Endothelial cell of umbilical vein (primary cell): ENCODE measurements at regions of chr18 and their contacts with region 1.

Region 1: GRCh38 chr18:21997207-21998143 is 171.9 kb upstream of the GATA6 start:
- DNase-seq: peak; percentile 68
- H3K4me3 ChIP-seq: no peak overlapping the region
- H3K27ac ChIP-seq: no peak overlapping the region
- H3K4me1 ChIP-seq: no peaks in the 10 kb centered on the region
- H3K27me3 ChIP-seq: peaks cover 0 to 2% of the 10 kb centered on the region in 2 experiments
- CTCF ChIP-seq: peak; percentile 70 to 74
- POLR2A ChIP-seq: no peak

Region 2: DNA sequence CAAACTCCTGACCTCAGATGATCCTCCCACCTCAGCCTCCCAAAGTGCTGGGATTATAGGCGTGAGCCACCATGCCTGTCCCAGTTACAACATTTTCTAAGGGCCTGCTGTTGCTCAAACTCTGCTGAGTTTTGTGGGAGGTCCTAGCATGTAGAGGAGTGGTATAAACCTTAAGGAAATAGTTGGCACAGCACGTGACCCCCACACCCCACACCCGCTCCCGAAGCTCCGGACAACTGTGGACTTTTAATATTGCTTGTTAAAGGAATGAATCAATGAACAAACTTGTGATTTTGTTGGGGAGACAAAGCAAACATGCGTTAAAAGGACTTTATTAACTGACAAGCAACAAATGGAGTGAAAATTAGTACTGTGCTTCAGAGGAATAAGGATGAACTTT is 34.1 kb after region 1 on chr18:
- CTCF ChIA-PET with region 1: interaction called, 17 read pairs
- POLR2A ChIA-PET with region 1: no interaction called
- dilution Hi-C with region 1: no loop called
- intact Hi-C with region 1: no loop called
- DNase-seq: no peak
- H3K4me3 ChIP-seq: no peak overlapping the region
- H3K27ac ChIP-seq: no peak overlapping the region
- H3K4me1 ChIP-seq: peaks cover 9% of the 10 kb centered on the region
- H3K27me3 ChIP-seq: no peaks in the 10 kb centered on the region
- CTCF ChIP-seq: no peak
- POLR2A ChIP-seq: no peak

Region 3: DNA sequence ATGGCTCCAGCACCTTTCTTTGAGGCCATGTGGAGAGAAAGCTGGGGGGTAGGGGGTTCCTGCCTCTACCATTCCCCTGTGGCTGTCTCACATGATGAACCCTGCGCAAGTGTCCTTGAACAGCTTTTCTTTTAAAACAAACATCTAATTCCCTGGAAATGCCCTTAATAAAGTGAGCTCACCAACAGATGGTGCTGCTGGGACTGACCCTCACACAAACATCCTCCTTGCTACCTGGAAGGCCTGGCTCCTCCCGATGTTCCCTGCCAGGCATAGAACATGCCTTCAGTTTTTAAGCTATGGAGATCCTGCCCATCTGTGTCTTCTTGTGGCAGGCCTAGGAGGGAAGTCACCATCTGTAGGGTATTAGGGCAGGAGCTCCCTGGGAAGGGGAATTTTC is 111.2 kb after region 1 on chr18:
- CTCF ChIA-PET with region 1: interaction called, 17 read pairs
- POLR2A ChIA-PET with region 1: no interaction called
- dilution Hi-C with region 1: no loop called
- intact Hi-C with region 1: no loop called
- DNase-seq: peak; percentile 22
- H3K4me3 ChIP-seq: no peak overlapping the region
- H3K27ac ChIP-seq: no peak overlapping the region
- H3K4me1 ChIP-seq: peaks cover 5% of the 10 kb centered on the region
- H3K27me3 ChIP-seq: peaks cover 0 to 2% of the 10 kb centered on the region in 2 experiments
- CTCF ChIP-seq: peak in 1 of 2 donors; percentile 8
- POLR2A ChIP-seq: no peak

Region 4: GRCh38 chr18:22136395-22136794 is 138.9 kb after region 1 on chr18:
- CTCF ChIA-PET with region 1: interaction called, 12 read pairs
- POLR2A ChIA-PET with region 1: no interaction called
- dilution Hi-C with region 1: no loop called
- intact Hi-C with region 1: no loop called
- DNase-seq: peak; percentile 22
- H3K4me3 ChIP-seq: no peak overlapping the region
- H3K27ac ChIP-seq: no peak overlapping the region
- H3K4me1 ChIP-seq: no peaks in the 10 kb centered on the region
- H3K27me3 ChIP-seq: peaks cover 0 to 4% of the 10 kb centered on the region in 2 experiments
- CTCF ChIP-seq: no peak
- POLR2A ChIP-seq: no peak